ENCODE measurements at regions of chr6 and their contacts with region 1.

Region 1: GRCh38 chr6:4402439-4402976 is 267.1 kb upstream of the ECI2 start:
- DNase-seq: peak in 1 of 2 donors; percentile 71
- ATAC-seq: peak; percentile 74 to 94 (median 90)
- H3K4me3 ChIP-seq: no peak overlapping the region
- H3K27ac ChIP-seq: peak overlapping the region; percentile 37 to 90 (median 82)
- H3K4me1 ChIP-seq: peaks cover 4 to 32% (median 28%) of the 10 kb centered on the region in 9 donors
- H3K27me3 ChIP-seq: no peaks in the 10 kb centered on the region
- CTCF ChIP-seq: no peak

Region 2: DNA sequence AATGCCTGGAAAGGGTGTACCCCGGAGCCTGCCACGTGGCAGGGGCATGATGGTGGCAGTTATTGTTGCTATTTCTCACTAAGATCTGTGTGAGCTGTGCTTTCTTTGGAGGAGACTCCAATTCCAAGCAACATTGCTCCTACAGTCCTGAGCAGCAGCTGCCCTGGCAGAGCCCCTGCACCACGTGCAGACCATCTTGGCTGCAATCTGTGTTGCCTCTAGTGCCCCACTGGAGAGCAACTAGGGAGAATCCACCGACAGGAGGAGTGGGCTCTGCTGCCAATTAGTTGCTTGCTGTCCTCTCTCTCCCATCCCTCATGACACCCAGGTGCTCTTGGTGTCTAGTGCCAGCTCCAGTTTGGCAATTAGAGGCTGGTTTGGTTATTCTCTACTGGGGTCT is 767.0 kb before region 1 on chr6:
- intact Hi-C with region 1: no loop called
- DNase-seq: no peak
- ATAC-seq: no peak
- H3K4me3 ChIP-seq: no peak overlapping the region
- H3K27ac ChIP-seq: no peak overlapping the region
- H3K4me1 ChIP-seq: no peaks in the 10 kb centered on the region
- H3K27me3 ChIP-seq: peaks cover 0 to 8% (median 0%) of the 10 kb centered on the region in 7 donors
- CTCF ChIP-seq: no peak

Region 3: DNA sequence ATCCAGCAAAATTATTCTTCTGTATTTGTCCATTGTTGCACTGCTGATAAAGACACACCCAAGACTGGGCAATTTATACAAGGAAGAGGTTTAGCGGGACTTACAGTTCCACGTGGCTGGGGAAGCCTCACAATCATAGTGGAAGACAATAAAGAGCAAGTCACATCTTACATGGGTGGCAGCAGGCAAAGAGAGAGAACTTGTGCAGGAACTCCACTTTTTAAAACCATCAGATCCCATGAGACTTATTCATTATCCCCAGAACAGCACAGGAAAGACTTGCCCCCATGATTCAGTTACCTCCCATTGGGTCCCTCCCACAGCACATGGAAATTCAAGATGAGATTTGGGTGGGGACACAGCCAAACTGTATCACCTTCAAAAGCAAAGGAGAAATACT is 19.3 kb after region 1 on chr6:
- intact Hi-C with region 1: loop called in 1 of 10 experiments (anchors 1 kb)
- DNase-seq: no peak
- ATAC-seq: no peak
- H3K4me3 ChIP-seq: no peak overlapping the region
- H3K27ac ChIP-seq: no peak overlapping the region
- H3K4me1 ChIP-seq: no peaks in the 10 kb centered on the region
- H3K27me3 ChIP-seq: no peaks in the 10 kb centered on the region
- CTCF ChIP-seq: no peak

Region 4: GRCh38 chr6:4518506-4518905 is 116.0 kb after region 1 on chr6:
- intact Hi-C with region 1: no loop called
- DNase-seq: no peak
- ATAC-seq: no peak
- H3K4me3 ChIP-seq: no peak overlapping the region
- H3K27ac ChIP-seq: no peak overlapping the region
- H3K4me1 ChIP-seq: no peaks in the 10 kb centered on the region
- H3K27me3 ChIP-seq: no peaks in the 10 kb centered on the region
- CTCF ChIP-seq: no peak

Region 5: DNA sequence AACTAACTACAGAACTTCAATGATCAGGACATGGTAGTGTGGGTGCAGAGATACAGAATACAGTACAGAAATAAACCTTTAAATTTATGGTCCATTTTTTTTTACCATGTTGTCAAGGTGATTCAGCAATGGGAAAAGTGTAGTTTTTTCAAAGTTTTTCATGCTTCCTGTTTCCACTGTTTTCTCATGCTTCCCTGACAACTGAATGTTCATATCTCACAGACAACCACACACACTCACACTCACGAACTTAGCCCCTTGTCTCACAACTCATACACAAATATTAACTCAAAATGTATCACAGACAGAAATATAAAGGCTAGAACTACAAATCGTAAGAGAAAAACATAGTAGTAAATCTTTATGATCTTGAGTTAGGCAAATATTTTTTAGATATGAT is 141.1 kb after region 1 on chr6:
- intact Hi-C with region 1: no loop called
- DNase-seq: no peak
- ATAC-seq: no peak
- H3K4me3 ChIP-seq: no peak overlapping the region
- H3K27ac ChIP-seq: no peak overlapping the region
- H3K4me1 ChIP-seq: no peaks in the 10 kb centered on the region
- H3K27me3 ChIP-seq: no peaks in the 10 kb centered on the region
- CTCF ChIP-seq: no peak

Measured in heart right ventricle (tissue), 16 donors.